CD8-positive, alpha-beta T cell (primary cell): ENCODE measurements at regions of chr7 and their contacts with region 1.

Region 1: GRCh38 chr7:66493235-66494181 is 135.2 kb upstream of the KCTD7 start:
- DNase-seq: peak; percentile 91 to 99 (median 96)
- ATAC-seq: peak; percentile 92
- H3K4me3 ChIP-seq: peak overlapping the region; percentile 60 to 96
- H3K4me3 Mint-ChIP-seq: peak overlapping the region; percentile 92
- H3K27ac ChIP-seq: peak overlapping the region; percentile 88 to 98
- H3K27ac Mint-ChIP-seq: peak overlapping the region; percentile 99
- H3K4me1 ChIP-seq: peaks cover 6% of the 10 kb centered on the region
- H3K4me1 Mint-ChIP-seq: peaks cover 21% of the 10 kb centered on the region
- H3K27me3 ChIP-seq: no peaks in the 10 kb centered on the region
- H3K27me3 Mint-ChIP-seq: no peaks in the 10 kb centered on the region
- CTCF ChIP-seq: no peak

Region 2: GRCh38 chr7:65872776-65873581 is 620.5 kb before region 1 on chr7 and contains the start of gene VKORC1L1:
- CTCF ChIA-PET with region 1: no interaction called
- POLR2A ChIA-PET with region 1: interaction called, 4 read pairs
- intact Hi-C with region 1: loop called in 1 of 2 experiments (anchors 10 kb)
- DNase-seq: peak; percentile 90 to 98 (median 94)
- ATAC-seq: peak; percentile 86
- H3K4me3 ChIP-seq: peak within 1 kb of the TSS; percentile 48 to 69
- H3K4me3 Mint-ChIP-seq: peak within 1 kb of the TSS; percentile 85
- H3K27ac ChIP-seq: peak within 1 kb of the TSS in 1 of 2 experiments; percentile 54
- H3K27ac Mint-ChIP-seq: peak within 1 kb of the TSS; percentile 66
- H3K4me1 ChIP-seq: no peaks in the 10 kb centered on the region
- H3K4me1 Mint-ChIP-seq: peaks cover 8% of the 10 kb centered on the region
- H3K27me3 ChIP-seq: no peaks in the 10 kb centered on the region
- H3K27me3 Mint-ChIP-seq: no peaks in the 10 kb centered on the region
- CTCF ChIP-seq: no peak
- total RNA-seq, gene VKORC1L1: 1.4 to 2.0 TPM

Region 3: GRCh38 chr7:66204822-66205740 is 288.4 kb before region 1 on chr7 and contains the start of gene TPST1:
- CTCF ChIA-PET with region 1: no interaction called
- POLR2A ChIA-PET with region 1: interaction called, 3 read pairs
- intact Hi-C with region 1: loop called in 1 of 2 experiments (anchors 10 kb)
- DNase-seq: peak; percentile 61 to 90 (median 75)
- ATAC-seq: peak; percentile 89
- H3K4me3 ChIP-seq: peak within 1 kb of the TSS; percentile 59 to 84
- H3K4me3 Mint-ChIP-seq: peak within 1 kb of the TSS; percentile 89
- H3K27ac ChIP-seq: peak within 1 kb of the TSS in 1 of 2 experiments; percentile 54
- H3K27ac Mint-ChIP-seq: peak within 1 kb of the TSS; percentile 66
- H3K4me1 ChIP-seq: peaks cover 35% of the 10 kb centered on the region
- H3K4me1 Mint-ChIP-seq: peaks cover 42% of the 10 kb centered on the region
- H3K27me3 ChIP-seq: peaks cover 0 to 3% of the 10 kb centered on the region in 2 experiments
- H3K27me3 Mint-ChIP-seq: peaks cover 6% of the 10 kb centered on the region
- CTCF ChIP-seq: peak; percentile 48
- total RNA-seq, gene TPST1: 4.3 to 6.6 TPM

Region 4: GRCh38 chr7:66379761-66380160 is 113.7 kb before region 1 on chr7:
- CTCF ChIA-PET with region 1: no interaction called
- POLR2A ChIA-PET with region 1: no interaction called
- intact Hi-C with region 1: no loop called
- DNase-seq: no peak
- ATAC-seq: no peak
- H3K4me3 ChIP-seq: no peak overlapping the region
- H3K4me3 Mint-ChIP-seq: no peak overlapping the region
- H3K27ac ChIP-seq: no peak overlapping the region
- H3K27ac Mint-ChIP-seq: no peak overlapping the region
- H3K4me1 ChIP-seq: no peaks in the 10 kb centered on the region
- H3K4me1 Mint-ChIP-seq: no peaks in the 10 kb centered on the region
- H3K27me3 ChIP-seq: no peaks in the 10 kb centered on the region
- H3K27me3 Mint-ChIP-seq: no peaks in the 10 kb centered on the region
- CTCF ChIP-seq: no peak

Region 5: DNA sequence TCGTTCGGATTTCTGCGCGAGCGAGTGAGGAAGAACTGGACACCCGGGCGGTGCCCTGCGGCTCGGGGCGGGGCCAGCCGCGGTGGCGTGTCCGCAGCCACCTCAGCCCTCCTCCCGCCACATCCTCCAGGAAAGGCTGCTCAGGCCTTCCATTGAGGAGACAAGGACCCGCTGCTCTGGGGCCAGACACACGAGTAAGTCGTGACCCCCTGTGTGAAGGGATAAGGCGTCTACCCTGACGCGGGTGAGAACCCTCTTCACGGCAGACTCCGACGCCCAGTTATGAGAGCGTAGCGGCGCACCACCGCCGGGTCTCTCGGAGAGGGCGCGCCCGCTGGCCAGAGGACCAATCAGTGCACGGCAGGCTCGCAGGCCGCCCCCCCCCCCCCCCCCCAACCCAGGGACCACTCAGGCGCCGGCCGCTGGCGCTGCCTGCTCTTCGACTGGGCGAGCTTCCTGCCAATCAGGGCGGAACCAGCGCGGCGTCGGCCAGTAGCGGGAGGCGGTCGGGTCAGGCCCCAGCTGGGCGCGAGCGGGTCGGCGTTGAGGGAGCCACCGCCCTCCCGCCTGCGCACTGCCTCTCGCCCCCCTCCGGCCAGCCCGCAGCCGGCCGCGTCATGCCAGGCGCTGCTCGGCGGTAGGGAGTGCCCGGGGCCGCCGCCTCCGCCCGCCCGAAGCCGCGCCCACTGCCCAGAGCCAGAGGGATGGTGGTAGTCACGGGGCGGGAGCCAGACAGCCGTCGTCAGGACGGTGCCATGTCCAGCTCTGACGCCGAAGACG is 135.0 kb after region 1 on chr7 and contains the start of gene KCTD7:
- CTCF ChIA-PET with region 1: no interaction called
- POLR2A ChIA-PET with region 1: interaction called, 3 read pairs
- intact Hi-C with region 1: loop called in 1 of 2 experiments (anchors 2 kb)
- DNase-seq: peak; percentile 91 to 98 (median 94)
- ATAC-seq: peak; percentile 89
- H3K4me3 ChIP-seq: peak within 1 kb of the TSS; percentile 91 to 99
- H3K4me3 Mint-ChIP-seq: peak within 1 kb of the TSS; percentile 89
- H3K27ac ChIP-seq: peak within 1 kb of the TSS; percentile 89 to 97
- H3K27ac Mint-ChIP-seq: peak within 1 kb of the TSS; percentile 91
- H3K4me1 ChIP-seq: peaks cover 42% of the 10 kb centered on the region
- H3K4me1 Mint-ChIP-seq: peaks cover 51% of the 10 kb centered on the region
- H3K27me3 ChIP-seq: no peaks in the 10 kb centered on the region
- H3K27me3 Mint-ChIP-seq: no peaks in the 10 kb centered on the region
- CTCF ChIP-seq: no peak
- total RNA-seq, gene KCTD7: 12.9 to 13.2 TPM

Region 6: DNA sequence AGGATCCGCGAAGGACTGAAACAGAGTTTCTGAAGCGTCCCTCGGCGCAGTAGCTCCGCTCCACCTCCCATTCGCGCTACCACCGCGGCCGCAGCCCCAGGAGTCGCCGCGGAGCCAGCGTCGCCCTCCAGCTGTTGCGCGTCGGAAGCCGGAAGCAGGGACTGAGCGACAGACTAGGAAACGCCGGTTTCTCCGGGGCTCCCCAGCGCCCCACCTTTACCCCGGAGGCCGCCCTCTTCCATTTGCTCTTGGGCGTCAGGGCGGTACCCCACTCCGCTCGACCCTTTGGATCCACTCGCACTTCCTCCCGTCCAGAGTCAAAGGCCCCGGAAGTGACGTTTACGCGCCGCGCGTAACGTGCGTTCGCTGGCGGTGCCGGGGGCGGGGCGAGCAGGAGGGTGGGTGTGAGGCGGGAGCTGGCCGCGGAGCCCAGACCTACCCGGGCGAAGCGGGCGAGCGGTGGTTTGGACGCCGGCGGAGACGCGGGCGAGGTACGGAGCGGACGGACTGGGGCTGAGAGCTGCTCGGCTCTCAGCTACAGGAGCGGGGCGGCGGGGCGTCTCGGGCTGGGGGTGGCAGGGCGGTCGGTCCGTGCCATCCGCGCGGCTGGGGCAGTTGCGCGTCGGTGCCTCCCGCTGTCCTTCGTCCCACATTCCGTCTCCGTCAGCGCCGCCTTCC is 246.9 kb after region 1 on chr7 and contains the start of gene RABGEF1:
- CTCF ChIA-PET with region 1: interaction called, 3 read pairs
- POLR2A ChIA-PET with region 1: no interaction called
- intact Hi-C with region 1: loop called (anchors 2 kb)
- DNase-seq: peak; percentile 91 to 99 (median 98)
- ATAC-seq: peak; percentile 93
- H3K4me3 ChIP-seq: peak within 1 kb of the TSS; percentile 71 to 88
- H3K4me3 Mint-ChIP-seq: peak within 1 kb of the TSS; percentile 94
- H3K27ac ChIP-seq: peak within 1 kb of the TSS; percentile 92 to 95
- H3K27ac Mint-ChIP-seq: peak within 1 kb of the TSS; percentile 98
- H3K4me1 ChIP-seq: peaks cover 18% of the 10 kb centered on the region
- H3K4me1 Mint-ChIP-seq: peaks cover 51% of the 10 kb centered on the region
- H3K27me3 ChIP-seq: no peaks in the 10 kb centered on the region
- H3K27me3 Mint-ChIP-seq: no peaks in the 10 kb centered on the region
- CTCF ChIP-seq: no peak
- total RNA-seq, gene RABGEF1: 34.5 to 38.5 TPM

Region 7: GRCh38 chr7:67302113-67303039 is 808.9 kb after region 1 on chr7:
- CTCF ChIA-PET with region 1: no interaction called
- POLR2A ChIA-PET with region 1: interaction called, 9 read pairs
- intact Hi-C with region 1: loop called in 1 of 2 experiments (anchors 5 kb)
- DNase-seq: peak; percentile 93 to 99 (median 97)
- ATAC-seq: peak; percentile 77
- H3K4me3 ChIP-seq: peak overlapping the region; percentile 81 to 99
- H3K4me3 Mint-ChIP-seq: peak overlapping the region; percentile 97
- H3K27ac ChIP-seq: peak overlapping the region; percentile 92 to 93
- H3K27ac Mint-ChIP-seq: peak overlapping the region; percentile 99
- H3K4me1 ChIP-seq: no peaks in the 10 kb centered on the region
- H3K4me1 Mint-ChIP-seq: peaks cover 27% of the 10 kb centered on the region
- H3K27me3 ChIP-seq: no peaks in the 10 kb centered on the region
- H3K27me3 Mint-ChIP-seq: no peaks in the 10 kb centered on the region
- CTCF ChIP-seq: no peak